Activated CD4-positive, alpha-beta memory T cell treated with anti-CD3 and anti-CD28 coated beads for 36 hours (primary cell): ENCODE measurements at regions of chr9 and their contacts with region 1.

Region 1: DNA sequence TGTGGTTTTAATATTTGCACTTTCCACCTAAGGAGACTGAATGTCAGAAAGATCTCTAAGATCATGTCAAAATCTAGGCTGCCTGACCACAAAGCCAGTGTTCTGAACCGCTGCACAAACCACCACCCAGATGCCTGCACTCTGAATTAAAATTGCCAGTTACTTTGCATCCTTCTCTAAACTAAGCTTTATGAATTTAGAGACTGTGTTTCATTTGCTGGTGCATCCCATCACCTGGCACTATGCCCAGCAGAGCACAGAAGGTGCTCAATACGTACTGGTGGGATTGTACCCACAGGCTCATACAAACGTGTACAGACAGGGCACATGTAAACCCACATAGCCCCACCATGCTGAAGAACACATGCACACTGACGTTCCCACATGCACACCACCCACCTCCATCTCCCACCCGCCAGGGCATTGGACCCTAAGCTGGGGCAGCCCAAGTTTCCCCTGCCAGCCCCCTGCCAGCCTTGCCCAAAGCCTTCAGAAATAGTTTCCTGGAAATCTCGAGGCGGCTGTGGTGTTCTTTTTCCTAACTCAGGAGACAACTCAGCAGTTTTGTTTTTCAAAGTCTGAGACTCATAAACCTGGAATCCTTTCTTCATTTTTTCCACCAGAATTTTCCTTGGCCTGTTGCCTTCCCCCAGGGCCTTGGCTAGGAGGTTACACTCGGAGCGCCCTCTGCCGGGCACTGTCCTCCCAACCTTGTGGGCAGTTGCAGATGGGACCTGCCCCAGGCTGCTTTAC is 9.6 kb upstream of the TRAF1 start:
- DNase-seq: peak; percentile 94
- H3K4me3 Mint-ChIP-seq: peak overlapping the region; percentile 48
- H3K27ac Mint-ChIP-seq: peak overlapping the region; percentile 99
- H3K4me1 Mint-ChIP-seq: peaks cover 62% of the 10 kb centered on the region
- H3K27me3 Mint-ChIP-seq: no peaks in the 10 kb centered on the region

Region 2: GRCh38 chr9:120792898-120793765 is 143.1 kb before region 1 on chr9 and contains the start of gene FBXW2:
- CTCF ChIA-PET with region 1: interaction called, 3 read pairs
- POLR2A ChIA-PET with region 1: interaction called, 7 read pairs
- intact Hi-C with region 1: loop called (anchors 1 kb)
- DNase-seq: peak; percentile 95
- H3K4me3 Mint-ChIP-seq: peak within 1 kb of the TSS; percentile 80
- H3K27ac Mint-ChIP-seq: peak within 1 kb of the TSS; percentile 93
- H3K4me1 Mint-ChIP-seq: peaks cover 42% of the 10 kb centered on the region
- H3K27me3 Mint-ChIP-seq: no peaks in the 10 kb centered on the region
- total RNA-seq, gene FBXW2: 70.2 to 72.5 TPM

Region 3: GRCh38 chr9:120868676-120869359 is 67.4 kb before region 1 on chr9:
- CTCF ChIA-PET with region 1: interaction called, 27 read pairs
- POLR2A ChIA-PET with region 1: interaction called, 10 read pairs
- intact Hi-C with region 1: no loop called
- DNase-seq: peak; percentile 97
- H3K4me3 Mint-ChIP-seq: peak overlapping the region; percentile 80
- H3K27ac Mint-ChIP-seq: peak overlapping the region; percentile 87
- H3K4me1 Mint-ChIP-seq: peaks cover 46% of the 10 kb centered on the region
- H3K27me3 Mint-ChIP-seq: no peaks in the 10 kb centered on the region

Region 4: GRCh38 chr9:120875954-120876841 is 60.0 kb before region 1 on chr9:
- CTCF ChIA-PET with region 1: interaction called, 5 read pairs
- POLR2A ChIA-PET with region 1: interaction called, 10 read pairs
- intact Hi-C with region 1: loop called (anchors 1 kb)
- DNase-seq: peak; percentile 96
- H3K4me3 Mint-ChIP-seq: peak overlapping the region; percentile 92
- H3K27ac Mint-ChIP-seq: peak overlapping the region; percentile 98
- H3K4me1 Mint-ChIP-seq: peaks cover 79% of the 10 kb centered on the region
- H3K27me3 Mint-ChIP-seq: no peaks in the 10 kb centered on the region

Region 5: GRCh38 chr9:120892748-120893610 is 43.2 kb before region 1 on chr9:
- CTCF ChIA-PET with region 1: interaction called, 6 read pairs
- POLR2A ChIA-PET with region 1: interaction called, 5 read pairs
- intact Hi-C with region 1: loop called (anchors 1 kb)
- DNase-seq: peak; percentile 81
- H3K4me3 Mint-ChIP-seq: peak overlapping the region; percentile 62
- H3K27ac Mint-ChIP-seq: peak overlapping the region; percentile 95
- H3K4me1 Mint-ChIP-seq: peaks cover 84% of the 10 kb centered on the region
- H3K27me3 Mint-ChIP-seq: no peaks in the 10 kb centered on the region

Region 6: DNA sequence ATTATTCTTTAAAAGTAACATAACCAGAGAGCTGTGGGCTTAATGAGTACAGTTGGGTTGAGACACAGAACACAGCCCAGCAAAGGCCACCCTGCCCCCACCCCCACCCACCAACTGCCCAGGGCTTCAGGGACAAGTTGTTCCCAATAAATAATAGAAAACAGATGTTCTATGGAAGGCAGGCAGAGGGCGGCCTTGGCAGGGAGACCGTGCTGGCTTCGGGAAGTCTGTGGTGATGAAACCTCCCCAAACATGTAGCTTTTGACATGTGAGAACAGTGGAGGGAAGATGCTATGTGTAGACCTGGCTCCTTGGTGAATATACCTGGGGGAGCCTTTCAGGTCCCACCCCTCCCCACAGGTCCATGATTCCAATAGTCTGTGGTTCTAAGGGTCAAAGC is 19.6 kb before region 1 on chr9:
- CTCF ChIA-PET with region 1: interaction called, 76 read pairs
- POLR2A ChIA-PET with region 1: interaction called, 124 read pairs
- intact Hi-C with region 1: loop called (anchors 1 kb)
- DNase-seq: no peak
- H3K4me3 Mint-ChIP-seq: peak overlapping the region; percentile 51
- H3K27ac Mint-ChIP-seq: peak overlapping the region; percentile 79
- H3K4me1 Mint-ChIP-seq: peaks cover 87% of the 10 kb centered on the region
- H3K27me3 Mint-ChIP-seq: no peaks in the 10 kb centered on the region

Region 7: DNA sequence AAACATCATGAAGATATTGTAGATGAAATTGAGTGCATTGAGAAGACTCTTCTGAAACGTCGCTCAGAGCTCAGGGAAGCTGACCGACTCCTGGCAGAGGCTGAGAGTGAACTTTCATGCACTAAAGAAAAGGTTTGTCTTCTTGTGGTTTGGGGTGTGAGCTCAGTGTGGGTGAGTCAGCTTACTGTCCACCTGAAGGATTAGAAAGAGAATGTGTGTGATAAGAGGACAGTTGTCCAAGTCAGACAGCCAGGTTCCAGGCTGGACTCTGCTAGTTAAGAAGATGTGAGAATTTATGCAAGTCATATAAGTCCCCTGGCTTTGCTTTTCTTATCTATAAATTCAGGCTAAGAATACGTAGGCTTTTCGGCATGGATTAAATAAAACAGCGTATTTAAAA is 218.6 kb after region 1 on chr9:
- CTCF ChIA-PET with region 1: no interaction called
- POLR2A ChIA-PET with region 1: no interaction called
- intact Hi-C with region 1: no loop called
- DNase-seq: no peak
- H3K4me3 Mint-ChIP-seq: no peak overlapping the region
- H3K27ac Mint-ChIP-seq: peak overlapping the region; percentile 30
- H3K4me1 Mint-ChIP-seq: peaks cover 22% of the 10 kb centered on the region
- H3K27me3 Mint-ChIP-seq: no peaks in the 10 kb centered on the region